ENCODE measurements at regions of chr1 and their contacts with region 1.

Region 1: GRCh38 chr1:37595440-37596319 is at the start of gene GNL2:
- DNase-seq: peak; percentile 98
- H3K4me3 ChIP-seq: peak within 1 kb of the TSS; percentile 75 to 97 (median 89)
- H3K4me3 Mint-ChIP-seq: peak within 1 kb of the TSS; percentile 96 to 99
- H3K27ac ChIP-seq: peak within 1 kb of the TSS; percentile 90 to 97
- H3K27ac Mint-ChIP-seq: peak within 1 kb of the TSS; percentile 99 to 100 (median 99)
- H3K4me1 ChIP-seq: peaks cover 17 to 21% of the 10 kb centered on the region in 2 donors
- H3K4me1 Mint-ChIP-seq: peaks cover 19% of the 10 kb centered on the region
- H3K27me3 ChIP-seq: peaks cover 0 to 2% of the 10 kb centered on the region in 2 donors
- H3K27me3 Mint-ChIP-seq: peaks cover 0 to 4% (median 4%) of the 10 kb centered on the region in 3 donors
- CTCF ChIP-seq: no peak
- polyA plus RNA-seq, gene GNL2: 22.2 to 37.2 (median 35.4) TPM

Region 2: DNA sequence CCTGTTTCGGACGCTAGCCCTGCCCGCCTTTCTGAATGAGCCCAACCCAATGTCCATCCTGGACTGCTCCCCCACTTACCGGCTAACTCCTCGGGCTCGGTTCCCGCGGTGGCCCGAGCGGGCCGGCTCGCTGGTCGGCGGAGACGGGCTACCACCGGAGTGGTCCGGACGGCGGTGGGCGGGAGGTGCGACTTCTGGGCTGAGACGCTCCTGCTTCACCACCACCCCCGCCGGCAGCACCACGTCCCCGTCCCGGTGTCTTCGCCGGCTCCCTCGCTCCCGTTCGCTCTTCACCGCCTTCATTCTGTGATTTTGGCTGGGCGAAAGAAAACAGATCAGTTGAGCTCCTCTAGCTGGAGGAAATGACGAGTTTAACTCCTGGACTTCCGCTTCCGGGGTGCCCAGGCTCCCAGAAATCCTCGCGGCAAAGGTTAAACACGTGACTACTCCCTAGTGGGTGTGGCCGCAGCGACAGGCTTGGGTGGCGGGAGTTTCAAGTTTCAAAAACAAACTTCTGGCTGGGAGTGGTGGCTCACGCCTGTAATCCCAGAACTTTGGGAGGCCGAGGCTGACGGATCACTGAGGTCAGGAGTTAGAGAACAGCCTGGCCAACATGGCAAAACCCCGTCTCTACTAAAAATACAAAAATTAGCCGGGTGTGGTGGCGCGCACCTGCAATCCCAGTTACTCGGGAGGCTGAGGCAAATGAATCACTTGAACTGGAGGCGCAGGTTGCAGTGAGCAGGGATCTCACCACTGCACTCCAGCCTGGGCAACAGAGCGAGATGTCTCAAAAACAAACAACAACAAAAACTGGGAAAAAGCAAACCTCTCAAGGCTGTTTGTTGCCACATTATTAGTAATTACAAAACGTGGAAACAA is 41.5 kb before region 1 on chr1 and contains the start of gene SNIP1:
- intact Hi-C with region 1: loop called (anchors 2 to 5 kb)
- DNase-seq: peak; percentile 91 to 94 (median 93)
- H3K4me3 ChIP-seq: peak within 1 kb of the TSS; percentile 80 to 100 (median 80)
- H3K4me3 Mint-ChIP-seq: peak within 1 kb of the TSS; percentile 92 to 96
- H3K27ac ChIP-seq: peak within 1 kb of the TSS; percentile 79 to 98
- H3K27ac Mint-ChIP-seq: peak within 1 kb of the TSS; percentile 88 to 98 (median 96)
- H3K4me1 ChIP-seq: peaks cover 11 to 26% of the 10 kb centered on the region in 2 donors
- H3K4me1 Mint-ChIP-seq: peaks cover 24% of the 10 kb centered on the region
- H3K27me3 ChIP-seq: no peaks in the 10 kb centered on the region
- H3K27me3 Mint-ChIP-seq: no peaks in the 10 kb centered on the region
- CTCF ChIP-seq: no peak
- polyA plus RNA-seq, gene SNIP1: 1.6 to 6.8 (median 3.3) TPM

Region 3: DNA sequence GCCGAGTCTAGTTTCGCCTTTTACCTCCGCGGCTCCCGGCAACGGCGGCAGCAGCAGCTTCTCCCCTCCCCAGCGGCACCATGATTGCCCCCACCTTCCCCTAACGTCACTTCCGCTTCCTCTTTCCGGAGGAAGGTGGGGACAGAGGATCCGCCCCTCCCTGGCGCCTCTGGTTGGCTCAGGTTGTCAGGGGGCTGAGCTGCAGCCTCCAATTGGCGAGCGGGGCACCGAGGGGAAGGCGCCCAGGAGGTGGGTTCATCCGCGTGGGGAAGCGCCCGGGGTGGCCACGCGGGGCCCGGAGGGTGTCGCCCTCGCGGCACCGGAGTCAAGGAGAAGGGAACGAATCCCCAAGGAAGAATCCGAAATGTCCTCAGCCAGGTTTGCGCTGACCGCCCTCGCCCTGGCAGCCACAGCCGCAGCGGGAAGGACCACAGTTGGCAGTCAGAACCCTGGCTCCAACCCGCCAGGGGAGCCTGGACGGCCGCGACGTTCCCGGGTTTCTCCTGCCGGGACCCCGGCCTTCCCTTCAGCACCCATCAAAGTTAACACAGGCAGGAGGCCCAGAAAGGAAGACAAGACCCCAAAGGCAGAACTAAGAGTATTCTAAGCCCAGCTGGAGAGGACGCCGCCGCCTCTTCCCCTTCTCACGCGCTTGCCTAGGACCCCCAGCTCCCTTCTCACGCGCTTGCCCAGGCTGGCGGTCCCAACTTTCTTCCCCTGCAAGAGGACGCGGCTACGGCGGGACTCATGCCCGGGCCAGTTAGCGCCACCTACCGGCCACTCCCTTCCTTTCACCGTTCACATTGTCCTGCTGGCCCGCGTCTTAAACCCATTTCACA is 264.0 kb after region 1 on chr1 and contains the start of gene MTF1:
- intact Hi-C with region 1: loop called in 1 of 2 experiments (anchors 10 kb)
- DNase-seq: peak; percentile 97 to 99 (median 99)
- H3K4me3 ChIP-seq: peak within 1 kb of the TSS; percentile 74 to 97 (median 95)
- H3K4me3 Mint-ChIP-seq: peak within 1 kb of the TSS; percentile 95
- H3K27ac ChIP-seq: peak within 1 kb of the TSS; percentile 88 to 99
- H3K27ac Mint-ChIP-seq: peak within 1 kb of the TSS; percentile 97 to 99 (median 98)
- H3K4me1 ChIP-seq: peaks cover 45 to 54% of the 10 kb centered on the region in 2 donors
- H3K4me1 Mint-ChIP-seq: peaks cover 44% of the 10 kb centered on the region
- H3K27me3 ChIP-seq: no peaks in the 10 kb centered on the region
- H3K27me3 Mint-ChIP-seq: no peaks in the 10 kb centered on the region
- CTCF ChIP-seq: peak; percentile 92
- polyA plus RNA-seq, gene MTF1: 17.1 to 41.0 (median 29.6) TPM

Region 4: GRCh38 chr1:38012363-38013226 is 416.9 kb after region 1 on chr1 and contains the start of gene UTP11:
- intact Hi-C with region 1: loop called in 1 of 2 experiments (anchors 10 kb)
- DNase-seq: peak; percentile 96 to 100 (median 99)
- H3K4me3 ChIP-seq: peak within 1 kb of the TSS; percentile 81 to 84 (median 83)
- H3K4me3 Mint-ChIP-seq: peak within 1 kb of the TSS; percentile 97 to 99
- H3K27ac ChIP-seq: peak within 1 kb of the TSS; percentile 86 to 92
- H3K27ac Mint-ChIP-seq: peak within 1 kb of the TSS; percentile 96 to 99 (median 97)
- H3K4me1 ChIP-seq: peaks cover 38 to 46% of the 10 kb centered on the region in 2 donors
- H3K4me1 Mint-ChIP-seq: peaks cover 36% of the 10 kb centered on the region
- H3K27me3 ChIP-seq: no peaks in the 10 kb centered on the region
- H3K27me3 Mint-ChIP-seq: peaks cover 0 to 2% (median 0%) of the 10 kb centered on the region in 3 donors
- CTCF ChIP-seq: no peak
- polyA plus RNA-seq, gene UTP11: 10.9 to 26.0 (median 20.5) TPM